Heart left ventricle (tissue), 16 donors: ENCODE measurements at regions of chr1 and their contacts with region 1.

Region 1: GRCh38 chr1:211305044-211305443 is 21.6 kb upstream of the TRAF5 start:
- DNase-seq: peak in 2 of 5 donors; percentile 21 to 31
- ATAC-seq: peak; percentile 77 to 86 (median 80)
- H3K4me3 ChIP-seq: no peak overlapping the region
- H3K27ac ChIP-seq: peak overlapping the region in 8 of 12 donors; percentile 7 to 57 (median 48)
- H3K4me1 ChIP-seq: peaks cover 0 to 23% (median 8%) of the 10 kb centered on the region in 12 donors
- H3K27me3 ChIP-seq: no peaks in the 10 kb centered on the region
- CTCF ChIP-seq: no peak
- POLR2A ChIP-seq: no peak

Region 2: DNA sequence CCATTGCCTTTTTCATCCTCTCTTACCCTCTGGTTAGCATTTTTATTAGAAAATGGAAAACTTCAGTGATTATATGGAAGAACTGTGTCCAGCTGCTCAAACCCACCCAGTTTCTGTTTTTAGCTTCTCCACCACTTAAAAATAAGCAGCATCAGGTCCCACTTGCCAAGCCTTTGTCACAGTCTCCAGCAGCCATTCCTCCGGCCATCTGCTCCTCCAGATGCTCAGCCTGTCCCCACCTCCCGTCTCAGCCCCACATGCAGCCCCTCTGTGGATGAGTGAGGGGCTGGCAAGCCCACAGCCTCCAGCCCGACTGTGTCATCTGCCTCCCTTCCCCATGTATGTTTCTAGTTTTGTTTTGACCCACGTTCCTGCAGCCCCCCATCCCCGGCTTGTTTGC is 686.7 kb before region 1 on chr1:
- intact Hi-C with region 1: no loop called
- DNase-seq: no peak
- ATAC-seq: no peak
- H3K4me3 ChIP-seq: no peak overlapping the region
- H3K27ac ChIP-seq: no peak overlapping the region
- H3K4me1 ChIP-seq: no peaks in the 10 kb centered on the region
- H3K27me3 ChIP-seq: no peaks in the 10 kb centered on the region
- CTCF ChIP-seq: no peak
- POLR2A ChIP-seq: no peak

Region 3: DNA sequence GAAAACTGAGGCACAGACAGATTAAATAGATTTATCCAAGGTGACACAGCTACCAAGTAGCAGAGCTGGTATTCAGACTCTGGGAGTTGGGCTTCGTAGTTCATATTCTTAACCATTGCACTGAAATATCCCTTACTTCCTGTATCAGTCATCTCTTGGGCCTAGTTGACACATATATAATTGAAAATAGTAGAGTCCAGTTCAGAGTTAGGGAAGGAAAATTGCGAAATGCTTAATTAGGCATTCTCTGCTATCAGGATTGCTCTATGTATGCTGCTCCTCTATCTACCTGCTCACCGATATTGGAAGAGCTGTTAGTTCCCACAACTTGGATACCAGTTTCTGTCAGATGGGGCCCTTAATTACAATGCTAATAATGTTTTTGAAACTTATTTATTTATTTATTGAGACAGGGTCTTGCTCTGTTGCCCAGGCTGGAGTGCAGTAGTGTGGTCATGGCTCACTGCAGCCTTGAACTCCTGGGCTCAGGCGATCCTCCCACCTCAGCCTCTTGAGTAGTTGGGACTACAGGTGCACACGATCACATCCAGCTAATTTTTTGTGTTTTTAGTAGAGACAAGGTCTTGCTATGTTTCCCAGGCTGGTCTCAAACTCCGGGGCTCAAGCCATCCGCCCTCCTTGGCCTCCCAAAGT is 37.7 kb before region 1 on chr1:
- intact Hi-C with region 1: loop called in 1 of 10 experiments (anchors 5 kb)
- DNase-seq: no peak
- ATAC-seq: no peak
- H3K4me3 ChIP-seq: no peak overlapping the region
- H3K27ac ChIP-seq: no peak overlapping the region
- H3K4me1 ChIP-seq: peaks cover 0 to 7% (median under 1%) of the 10 kb centered on the region in 12 donors
- H3K27me3 ChIP-seq: no peaks in the 10 kb centered on the region
- CTCF ChIP-seq: no peak
- POLR2A ChIP-seq: no peak

Region 4: DNA sequence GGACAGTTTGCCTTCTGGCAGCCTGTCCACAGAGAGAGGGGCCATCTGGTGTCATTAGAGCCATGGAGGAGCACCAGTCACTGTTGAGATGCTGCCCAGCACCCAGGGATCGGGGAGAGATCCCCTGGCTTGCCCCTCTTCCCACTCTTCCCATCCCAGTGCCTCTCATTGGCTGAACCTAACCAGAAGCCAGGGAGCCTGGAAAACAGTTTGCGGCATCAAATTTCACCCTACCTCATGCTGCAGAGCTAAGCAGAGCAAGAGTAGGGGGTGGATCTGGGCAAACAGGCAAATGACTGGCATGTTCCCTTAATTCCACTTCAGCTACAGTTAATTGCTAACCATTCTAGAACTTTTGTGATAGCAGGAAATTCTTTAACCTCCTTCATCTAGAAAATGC is 40.7 kb after region 1 on chr1:
- intact Hi-C with region 1: no loop called
- DNase-seq: no peak
- ATAC-seq: no peak
- H3K4me3 ChIP-seq: no peak overlapping the region
- H3K27ac ChIP-seq: no peak overlapping the region
- H3K4me1 ChIP-seq: peaks cover 0 to 39% (median 0%) of the 10 kb centered on the region in 12 donors
- H3K27me3 ChIP-seq: no peaks in the 10 kb centered on the region
- CTCF ChIP-seq: no peak
- POLR2A ChIP-seq: no peak